Panc1 (cell line): ENCODE measurements at regions of chr5 and their contacts with region 1.

Region 1: GRCh38 chr5:16679190-16679589 is 62.4 kb upstream of the RETREG1 start:
- DNase-seq: no peak
- ATAC-seq: no peak
- H3K4me3 ChIP-seq: no peak overlapping the region
- H3K27ac ChIP-seq: no peak overlapping the region
- H3K4me1 ChIP-seq: no peaks in the 10 kb centered on the region
- H3K27me3 ChIP-seq: no peaks in the 10 kb centered on the region
- CTCF ChIP-seq: no peak

Region 2: GRCh38 chr5:16690243-16690852 is 11.2 kb after region 1 on chr5:
- CTCF ChIA-PET with region 1: interaction called, 3 read pairs
- POLR2A ChIA-PET with region 1: interaction called, 12 read pairs
- in situ Hi-C with region 1: no loop called
- intact Hi-C with region 1: no loop called
- DNase-seq: peak; percentile 20
- ATAC-seq: peak; percentile 92
- H3K4me3 ChIP-seq: no peak overlapping the region
- H3K27ac ChIP-seq: no peak overlapping the region
- H3K4me1 ChIP-seq: no peaks in the 10 kb centered on the region
- H3K27me3 ChIP-seq: no peaks in the 10 kb centered on the region
- CTCF ChIP-seq: peak; percentile 89

Region 3: GRCh38 chr5:16871746-16872339 is 192.7 kb after region 1 on chr5:
- CTCF ChIA-PET with region 1: no interaction called
- POLR2A ChIA-PET with region 1: no interaction called
- in situ Hi-C with region 1: no loop called
- intact Hi-C with region 1: no loop called
- DNase-seq: no peak
- ATAC-seq: no peak
- H3K4me3 ChIP-seq: no peak overlapping the region
- H3K27ac ChIP-seq: peak overlapping the region; percentile 80
- H3K4me1 ChIP-seq: peaks cover 42% of the 10 kb centered on the region
- H3K27me3 ChIP-seq: no peaks in the 10 kb centered on the region
- CTCF ChIP-seq: no peak